ENCODE measurements at regions of chr14 and their contacts with region 1.

Region 1: GRCh38 chr14:29716150-29716549 is 211.5 kb downstream of the PRKD1 start:
- DNase-seq: peak; percentile 54
- ATAC-seq: peak; percentile 40
- H3K4me3 ChIP-seq: no peak overlapping the region
- H3K27ac ChIP-seq: no peak overlapping the region
- H3K4me1 ChIP-seq: peaks cover 3% of the 10 kb centered on the region; the same call in 1 of the 2 replicates
- H3K27me3 ChIP-seq: no peaks in the 10 kb centered on the region
- CTCF ChIP-seq: no peak
- POLR2A ChIP-seq: no peak
- RAD21 ChIP-seq: no peak

Region 2: GRCh38 chr14:29584992-29585391 is 131.2 kb before region 1 on chr14:
- CTCF ChIA-PET with region 1: no interaction called
- POLR2A ChIA-PET with region 1: no interaction called
- dilution Hi-C with region 1: no loop called
- in situ Hi-C with region 1: no loop called
- intact Hi-C with region 1: loop called (anchors 5 kb)
- DNase-seq: peak; percentile 94
- ATAC-seq: peak; percentile 96
- H3K4me3 ChIP-seq: no peak overlapping the region
- H3K27ac ChIP-seq: no peak overlapping the region
- H3K4me1 ChIP-seq: no peaks in the 10 kb centered on the region
- H3K27me3 ChIP-seq: no peaks in the 10 kb centered on the region
- CTCF ChIP-seq: no peak
- POLR2A ChIP-seq: no peak
- RAD21 ChIP-seq: 0 out of 2 replicates have a peak, but pooled peaks have one; percentile 11

Measured in IMR-90 (cell line).